ENCODE measurements at regions of chr12 and their contacts with region 1.

Region 1: GRCh38 chr12:32493282-32493681 is 93.9 kb downstream of the FGD4 start:
- DNase-seq: no peak
- ATAC-seq: no peak
- H3K4me3 ChIP-seq: no peak overlapping the region
- H3K4me3 Mint-ChIP-seq: no peak overlapping the region
- H3K27ac ChIP-seq: no peak overlapping the region
- H3K27ac Mint-ChIP-seq: no peak overlapping the region
- H3K4me1 ChIP-seq: no peaks in the 10 kb centered on the region
- H3K4me1 Mint-ChIP-seq: peaks cover 2% of the 10 kb centered on the region
- H3K27me3 ChIP-seq: no peaks in the 10 kb centered on the region
- H3K27me3 Mint-ChIP-seq: no peaks in the 10 kb centered on the region
- CTCF ChIP-seq: no peak

Region 2: GRCh38 chr12:32455607-32456071 is 37.6 kb before region 1 on chr12:
- CTCF ChIA-PET with region 1: interaction called, 3 read pairs
- POLR2A ChIA-PET with region 1: no interaction called
- intact Hi-C with region 1: loop called in 1 of 2 experiments (anchors 1 kb)
- DNase-seq: peak in 3 of 9 experiments; percentile 14 to 69 (median 50)
- ATAC-seq: no peak
- H3K4me3 ChIP-seq: no peak overlapping the region
- H3K4me3 Mint-ChIP-seq: peak overlapping the region; percentile 24
- H3K27ac ChIP-seq: no peak overlapping the region
- H3K27ac Mint-ChIP-seq: no peak overlapping the region
- H3K4me1 ChIP-seq: no peaks in the 10 kb centered on the region
- H3K4me1 Mint-ChIP-seq: peaks cover 2% of the 10 kb centered on the region
- H3K27me3 ChIP-seq: no peaks in the 10 kb centered on the region
- H3K27me3 Mint-ChIP-seq: no peaks in the 10 kb centered on the region
- CTCF ChIP-seq: peak; percentile 66